ENCODE measurements at regions of chr5 and their contacts with region 1.

Region 1: DNA sequence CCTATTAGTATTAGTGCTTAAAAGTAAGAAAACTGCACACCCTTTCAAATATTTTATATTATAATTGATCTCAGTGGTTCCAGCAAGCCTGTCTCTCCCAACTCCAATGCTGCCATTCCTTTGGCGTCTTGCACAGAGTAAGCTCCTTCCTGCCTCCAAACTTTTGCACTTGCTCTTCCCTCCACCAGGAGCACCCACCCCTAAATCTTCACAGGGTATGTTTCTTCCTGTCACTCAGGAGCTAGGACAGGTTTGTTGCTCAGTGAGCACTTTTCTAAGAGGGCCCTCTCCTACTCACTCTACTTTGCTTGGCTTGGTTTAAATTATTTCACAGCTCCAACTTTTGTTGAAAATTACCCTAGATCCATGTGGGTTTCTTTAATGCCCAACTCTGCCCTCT is 189.1 kb upstream of the ADRA1B start:
- DNase-seq: no peak
- H3K4me3 ChIP-seq: no peak overlapping the region
- CTCF ChIP-seq: no peak
- POLR2A ChIP-seq: no peak

Region 2: GRCh38 chr5:158074992-158075769 is 1652.0 kb before region 1 on chr5:
- intact Hi-C with region 1: loop called (anchors 5 kb)
- DNase-seq: peak; percentile 38 to 89
- H3K4me3 ChIP-seq: no peak overlapping the region
- CTCF ChIP-seq: no peak
- POLR2A ChIP-seq: no peak

Region 3: GRCh38 chr5:159427180-159428012 is 299.8 kb before region 1 on chr5:
- intact Hi-C with region 1: no loop called
- DNase-seq: no peak
- H3K4me3 ChIP-seq: no peak overlapping the region
- CTCF ChIP-seq: no peak
- POLR2A ChIP-seq: no peak

Measured in lower leg skin (tissue), 4 donors.